Posterior vena cava (tissue), 2 donors: ENCODE measurements at regions of chr9 and their contacts with region 1.

Region 1: GRCh38 chr9:81969971-81970370 is 18.6 kb upstream of the SPATA31D1 start:
- DNase-seq: no peak

Region 2: GRCh38 chr9:82021198-82021597 is 51.2 kb after region 1 on chr9:
- intact Hi-C with region 1: loop called in 1 of 2 experiments (anchors 1 kb)
- DNase-seq: no peak

Region 3: DNA sequence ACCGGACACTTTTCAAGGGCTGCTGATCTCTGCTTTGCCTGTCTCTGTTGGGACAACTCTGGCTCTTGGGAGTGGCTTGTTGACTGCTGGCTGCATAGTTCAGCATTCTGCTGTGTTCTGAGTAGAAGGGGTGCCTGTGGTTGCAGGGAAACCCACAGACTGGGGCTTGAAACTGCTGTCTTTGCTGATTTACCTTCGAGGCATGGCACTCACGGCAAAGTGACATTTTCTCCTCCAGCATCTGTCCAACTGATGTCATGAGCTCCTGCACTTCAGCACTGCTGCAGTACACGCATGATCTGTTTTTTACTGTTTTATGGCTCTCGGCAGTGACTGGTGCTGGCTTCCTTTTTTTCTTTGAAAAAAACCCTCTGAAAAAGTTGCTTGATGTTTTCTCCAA is 87.8 kb after region 1 on chr9:
- intact Hi-C with region 1: no loop called
- DNase-seq: no peak